Dorsolateral prefrontal cortex (tissue), 120 donors: ENCODE measurements at regions of chr1 and their contacts with region 1.

Region 1: DNA sequence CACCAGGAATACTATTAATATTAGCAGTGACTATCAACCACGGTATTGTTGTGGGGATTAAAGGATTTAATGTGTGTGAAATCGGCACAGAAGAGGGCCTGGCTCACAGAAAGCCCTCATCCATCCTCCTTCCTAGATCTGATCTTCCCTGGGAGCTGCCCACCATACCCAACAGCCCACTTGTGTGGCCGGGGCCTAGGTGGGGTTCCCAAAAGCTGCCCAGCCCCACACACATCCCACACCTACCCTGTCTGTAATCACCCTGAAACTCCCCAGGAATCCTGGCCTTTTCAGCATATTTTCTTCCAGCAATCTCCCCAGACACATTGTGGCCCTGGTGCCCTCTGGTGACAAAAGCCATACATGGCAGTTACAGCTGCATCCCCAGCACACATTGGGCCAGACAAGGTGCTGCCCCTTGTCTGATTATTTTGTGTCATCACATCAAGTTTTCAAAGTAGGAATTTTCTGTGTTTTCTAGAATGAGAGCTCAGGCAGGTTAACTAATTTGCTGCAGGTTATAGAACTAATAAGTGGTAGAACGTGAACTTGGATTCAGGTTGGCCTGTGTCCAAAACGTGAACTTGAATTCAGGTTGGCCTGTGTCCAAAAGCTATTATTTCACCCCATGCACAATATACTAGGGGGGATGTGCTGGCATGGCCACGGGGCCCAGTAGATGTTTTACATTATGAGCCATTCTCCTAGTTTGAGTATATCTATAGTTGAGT is 5.3 kb upstream of the SLC6A9 start:
- DNase-seq: peak in 9 of 10 donors; percentile 60 to 85 (median 77)
- H3K4me3 ChIP-seq: no peak overlapping the region
- H3K27ac ChIP-seq: peak overlapping the region in 58 of 59 donors; percentile 33 to 97 (median 78)
- H3K27me3 ChIP-seq: no peaks in the 10 kb centered on the region
- CTCF ChIP-seq: peak; percentile 38 to 97 (median 89)

Region 2: GRCh38 chr1:43946236-43947060 is 90.1 kb before region 1 on chr1 and contains the start of gene IPO13:
- intact Hi-C with region 1: loop called (anchors 5 to 10 kb)
- DNase-seq: peak; percentile 92 to 98 (median 96)
- H3K4me3 ChIP-seq: peak within 1 kb of the TSS; percentile 58 to 99 (median 93)
- H3K27ac ChIP-seq: peak within 1 kb of the TSS; percentile 92 to 100 (median 99)
- H3K27me3 ChIP-seq: no peaks in the 10 kb centered on the region
- CTCF ChIP-seq: peak; percentile 66 to 97 (median 90)
- total RNA-seq, gene IPO13: 48.0 to 243 (median 94.5) TPM

Region 3: GRCh38 chr1:43979528-43980254 is 56.9 kb before region 1 on chr1:
- intact Hi-C with region 1: loop called in 1 of 2 experiments (anchors 2 kb)
- DNase-seq: peak in 4 of 10 donors; percentile 14 to 50 (median 42)
- H3K4me3 ChIP-seq: peak overlapping the region; percentile 49 to 88 (median 76)
- H3K27ac ChIP-seq: peak overlapping the region in 48 of 59 donors; percentile 6 to 88 (median 58)
- H3K27me3 ChIP-seq: no peaks in the 10 kb centered on the region
- CTCF ChIP-seq: no peak

Region 4: GRCh38 chr1:44002606-44003157 is 33.9 kb before region 1 on chr1:
- intact Hi-C with region 1: loop called (anchors 1 to 2 kb)
- DNase-seq: no peak
- H3K4me3 ChIP-seq: no peak overlapping the region
- H3K27ac ChIP-seq: no peak overlapping the region
- H3K27me3 ChIP-seq: no peaks in the 10 kb centered on the region
- CTCF ChIP-seq: peak in 4 of 56 donors; percentile 4 to 19 (median 13)

Region 5: GRCh38 chr1:44072204-44072603 is 35.6 kb after region 1 on chr1:
- intact Hi-C with region 1: no loop called
- DNase-seq: peak in 4 of 10 donors; percentile 7 to 64 (median 50)
- H3K4me3 ChIP-seq: no peak overlapping the region
- H3K27ac ChIP-seq: no peak overlapping the region
- H3K27me3 ChIP-seq: no peaks in the 10 kb centered on the region
- CTCF ChIP-seq: no peak